Panc1 (cell line): ENCODE measurements at regions of chr7 and their contacts with region 1.

Region 1: GRCh38 chr7:115618676-115619075 is 411.9 kb downstream of the TFEC start:
- DNase-seq: no peak
- ATAC-seq: no peak
- H3K4me3 ChIP-seq: no peak overlapping the region
- H3K27ac ChIP-seq: no peak overlapping the region
- H3K4me1 ChIP-seq: no peaks in the 10 kb centered on the region
- H3K27me3 ChIP-seq: no peaks in the 10 kb centered on the region
- CTCF ChIP-seq: no peak

Region 2: DNA sequence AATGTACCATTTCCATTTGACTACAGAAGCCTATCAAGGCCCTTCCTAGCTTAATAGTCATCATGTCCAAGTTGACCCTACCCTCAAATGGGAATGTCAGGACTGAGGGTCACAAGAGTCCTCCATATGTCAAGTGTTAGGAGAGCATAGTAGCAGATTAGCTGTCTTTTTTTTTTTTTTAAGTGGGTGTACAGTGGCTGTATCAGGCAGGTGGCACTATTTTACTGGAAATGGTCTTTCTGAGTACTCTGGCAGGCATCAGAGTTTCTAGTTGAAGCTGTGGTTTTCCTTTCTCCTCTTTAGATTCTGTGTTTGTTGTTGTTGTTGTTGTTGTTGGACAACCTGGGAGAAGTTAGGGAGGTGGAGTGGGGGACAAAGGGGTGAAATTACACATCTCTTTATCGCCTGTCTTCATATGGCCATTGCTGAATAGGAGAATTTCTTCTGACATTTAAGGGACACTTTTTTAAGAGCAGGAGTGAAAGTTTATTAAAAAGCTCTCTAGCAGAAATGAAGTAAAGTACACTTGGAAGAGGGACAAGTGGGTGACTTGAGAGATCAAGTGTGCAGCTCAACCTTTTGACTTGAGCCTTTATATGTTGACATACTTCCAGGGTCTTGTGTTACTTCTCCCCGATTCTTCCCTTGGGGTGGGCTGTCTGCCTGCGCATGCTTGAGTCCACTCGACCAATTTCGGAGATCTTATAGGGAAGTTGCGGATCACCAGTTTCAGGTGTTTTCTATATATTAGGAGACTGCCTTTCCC is 1308.1 kb before region 1 on chr7:
- CTCF ChIA-PET with region 1: no interaction called
- POLR2A ChIA-PET with region 1: interaction called, 15 read pairs
- in situ Hi-C with region 1: no loop called
- intact Hi-C with region 1: no loop called
- DNase-seq: no peak
- ATAC-seq: no peak
- H3K4me3 ChIP-seq: no peak overlapping the region
- H3K27ac ChIP-seq: no peak overlapping the region
- H3K4me1 ChIP-seq: no peaks in the 10 kb centered on the region
- H3K27me3 ChIP-seq: no peaks in the 10 kb centered on the region
- CTCF ChIP-seq: peak; percentile 7; the same call in 1 of the 2 replicates